Heart left ventricle (tissue), 16 donors: ENCODE measurements at regions of chr3 and their contacts with region 1.

Region 1: DNA sequence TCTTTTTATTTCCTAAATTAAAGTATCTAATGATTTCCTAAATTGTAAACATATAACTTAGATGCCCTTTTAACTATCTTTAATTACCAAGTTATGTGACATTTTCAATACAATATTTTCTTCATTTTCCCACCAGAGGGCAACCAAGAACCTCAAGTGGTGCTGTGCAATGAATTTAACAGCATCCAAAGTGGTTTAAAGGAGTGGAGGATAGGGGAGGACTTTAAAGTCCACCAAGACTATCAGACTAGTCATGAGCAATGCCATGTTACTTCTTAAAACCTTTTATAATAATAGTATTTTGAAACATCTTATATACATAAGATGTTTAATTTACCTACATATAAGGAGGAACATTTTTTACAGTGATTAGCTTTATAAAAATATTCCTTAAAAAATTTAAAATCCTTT is 74.4 kb downstream of the DLG1 start:
- DNase-seq: no peak
- ATAC-seq: peak in 2 of 4 donors; percentile 41 to 54
- H3K4me3 ChIP-seq: no peak overlapping the region
- H3K27ac ChIP-seq: no peak overlapping the region
- H3K4me1 ChIP-seq: peaks cover 0 to 50% (median 20%) of the 10 kb centered on the region in 12 donors
- H3K27me3 ChIP-seq: no peaks in the 10 kb centered on the region
- CTCF ChIP-seq: peak; percentile 36 to 70 (median 52)
- POLR2A ChIP-seq: no peak

Region 2: DNA sequence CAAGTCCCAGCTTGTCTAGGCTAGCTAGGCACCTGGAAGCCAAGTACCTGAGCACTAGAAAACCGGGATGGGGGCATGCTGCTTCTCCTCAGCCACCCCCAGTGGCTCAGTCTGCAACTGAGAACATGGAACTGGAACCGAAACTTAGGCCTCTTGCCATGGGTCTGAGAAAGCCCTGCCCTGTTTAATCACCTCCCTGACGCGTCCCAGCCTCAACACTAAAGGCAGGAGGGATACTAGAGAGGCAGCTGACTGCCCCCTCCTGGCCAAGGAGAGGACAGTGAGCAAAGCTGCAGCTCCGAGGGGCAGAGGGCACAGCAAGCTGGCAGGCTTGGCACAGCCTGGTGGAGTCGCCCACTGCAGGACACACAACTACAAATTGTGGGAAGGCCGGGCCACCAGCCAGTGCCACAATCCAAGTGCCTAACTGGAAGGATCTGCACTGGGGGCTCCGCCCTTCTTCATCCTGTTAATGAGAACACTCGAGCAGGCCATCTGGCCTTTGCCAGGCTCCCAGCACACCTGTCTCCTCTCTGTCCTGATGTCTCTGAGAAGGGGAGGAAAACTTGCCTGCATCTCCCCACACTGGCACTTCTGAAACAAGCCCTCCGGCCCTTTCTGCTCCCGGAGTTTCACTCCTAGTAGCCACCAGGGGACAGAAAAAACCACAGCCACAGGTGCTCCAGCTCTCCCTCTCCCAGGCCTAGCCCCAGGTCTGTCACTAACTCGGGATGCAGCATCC is 278.0 kb after region 1 on chr3:
- intact Hi-C with region 1: loop called in 3 of 10 experiments (anchors 10 kb)
- DNase-seq: peak in 1 of 5 donors; percentile 44
- ATAC-seq: peak in 3 of 4 donors; percentile 67 to 78 (median 70)
- H3K4me3 ChIP-seq: no peak overlapping the region
- H3K27ac ChIP-seq: no peak overlapping the region
- H3K4me1 ChIP-seq: no peaks in the 10 kb centered on the region
- H3K27me3 ChIP-seq: no peaks in the 10 kb centered on the region
- CTCF ChIP-seq: peak in 11 of 12 donors; percentile 16 to 50 (median 36)
- POLR2A ChIP-seq: no peak

Region 3: DNA sequence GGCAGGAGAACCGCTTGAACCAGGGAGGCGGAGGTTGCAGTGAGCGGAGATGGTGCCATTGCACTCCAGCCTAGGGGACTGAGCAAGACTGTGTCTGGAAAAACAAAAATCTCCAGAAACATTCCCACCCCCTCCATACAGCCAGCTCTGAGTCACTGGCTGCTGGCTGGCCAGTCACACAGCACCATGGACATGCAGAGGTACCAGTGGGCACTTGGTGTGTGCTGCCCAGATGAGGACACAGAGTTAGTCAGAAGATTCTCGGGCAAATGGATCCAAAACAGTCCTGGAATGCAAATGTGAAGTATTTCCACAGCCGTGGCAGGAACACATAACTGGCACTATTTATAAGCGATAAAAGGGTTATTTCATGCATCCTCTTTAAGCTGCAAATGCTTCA is 287.1 kb after region 1 on chr3:
- intact Hi-C with region 1: loop called in 7 of 10 experiments (anchors 2 to 10 kb)
- DNase-seq: no peak
- ATAC-seq: no peak
- H3K4me3 ChIP-seq: no peak overlapping the region
- H3K27ac ChIP-seq: no peak overlapping the region
- H3K4me1 ChIP-seq: peaks cover 0 to 10% (median 5%) of the 10 kb centered on the region in 12 donors
- H3K27me3 ChIP-seq: no peaks in the 10 kb centered on the region
- CTCF ChIP-seq: no peak
- POLR2A ChIP-seq: no peak

Region 4: DNA sequence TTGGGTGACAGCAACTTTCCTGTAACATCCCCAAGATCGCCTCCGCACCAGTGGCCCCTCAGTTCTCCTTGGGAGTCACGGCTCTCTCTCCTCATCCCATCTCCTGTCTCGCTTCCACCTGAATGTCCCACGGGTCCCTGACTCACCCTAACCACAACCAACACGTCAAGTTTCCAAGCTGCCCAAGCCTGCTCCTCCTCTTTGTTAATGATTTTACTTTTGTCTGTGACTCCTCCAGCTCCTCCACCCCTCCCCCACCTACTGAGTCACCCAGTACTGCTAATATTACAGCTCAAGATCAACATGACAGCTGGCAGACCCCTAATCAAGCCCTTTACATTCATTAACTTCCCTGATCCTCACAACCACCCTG is 292.5 kb after region 1 on chr3:
- intact Hi-C with region 1: loop called in 4 of 10 experiments (anchors 2 to 10 kb)
- DNase-seq: no peak
- ATAC-seq: no peak
- H3K4me3 ChIP-seq: no peak overlapping the region
- H3K27ac ChIP-seq: no peak overlapping the region
- H3K4me1 ChIP-seq: peaks cover 0 to 6% (median 0%) of the 10 kb centered on the region in 12 donors
- H3K27me3 ChIP-seq: no peaks in the 10 kb centered on the region
- CTCF ChIP-seq: no peak
- POLR2A ChIP-seq: no peak